ENCODE measurements at regions of chr2 and their contacts with region 1.

Region 1: DNA sequence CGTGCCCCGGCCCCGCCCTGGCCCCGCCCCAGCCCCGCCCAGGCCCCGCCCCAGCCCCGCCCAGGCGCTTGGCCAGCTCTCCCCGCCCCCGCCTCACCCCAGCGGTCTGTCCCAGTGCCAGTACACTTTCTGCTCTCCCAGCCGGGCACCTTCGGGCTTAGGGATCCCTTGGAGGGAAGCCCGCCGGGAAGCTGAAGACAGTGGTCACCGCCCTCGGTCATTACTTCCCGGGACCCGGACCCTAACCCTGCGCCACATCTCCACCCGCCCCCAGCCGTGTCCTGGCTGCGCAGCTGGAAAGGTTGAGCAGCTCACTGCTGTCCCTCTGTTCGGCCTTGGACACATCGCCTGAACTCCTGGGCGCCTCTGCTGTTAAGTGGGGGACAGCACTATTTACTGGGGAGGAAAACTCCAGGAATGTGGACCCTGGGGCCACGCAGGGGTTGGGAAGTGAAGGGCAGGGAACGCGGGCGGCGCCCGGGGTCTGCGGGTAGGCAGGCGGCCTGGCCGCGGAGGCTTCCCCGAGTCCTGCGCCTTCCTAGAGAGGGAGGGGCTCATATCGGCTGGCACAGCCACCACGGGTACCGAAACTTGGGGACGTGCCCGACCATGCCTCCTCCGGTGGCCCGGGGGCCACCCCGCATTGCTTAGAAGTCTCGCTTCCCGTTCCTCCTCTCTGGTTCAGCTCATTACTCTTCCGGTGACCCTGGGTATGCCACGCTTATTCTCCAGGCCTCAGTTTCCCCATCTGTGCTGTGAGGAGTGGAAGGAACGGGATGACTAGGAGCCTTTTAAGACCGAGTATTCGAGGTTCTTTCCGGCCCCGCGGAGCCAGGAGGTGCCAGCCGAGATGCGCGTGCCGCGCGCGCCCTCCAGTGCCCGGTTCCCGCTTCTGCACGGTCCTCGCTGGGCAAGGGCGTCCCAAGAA is 121.0 kb downstream of the GYPC start:
- DNase-seq: peak; percentile 72
- H3K4me3 Mint-ChIP-seq: peak overlapping the region; percentile 87
- H3K27ac Mint-ChIP-seq: peak overlapping the region; percentile 18
- H3K4me1 Mint-ChIP-seq: peaks cover 6% of the 10 kb centered on the region
- H3K27me3 Mint-ChIP-seq: peaks cover 10% of the 10 kb centered on the region

Region 2: GRCh38 chr2:124804014-124804940 is 1972.7 kb before region 1 on chr2:
- intact Hi-C with region 1: loop called (anchors 5 kb)
- DNase-seq: no peak
- H3K4me3 Mint-ChIP-seq: no peak overlapping the region
- H3K27ac Mint-ChIP-seq: no peak overlapping the region
- H3K4me1 Mint-ChIP-seq: no peaks in the 10 kb centered on the region
- H3K27me3 Mint-ChIP-seq: no peaks in the 10 kb centered on the region

Region 3: GRCh38 chr2:126359494-126359893 is 417.5 kb before region 1 on chr2:
- intact Hi-C with region 1: loop called (anchors 2 kb)
- DNase-seq: no peak
- H3K4me3 Mint-ChIP-seq: no peak overlapping the region
- H3K27ac Mint-ChIP-seq: no peak overlapping the region
- H3K4me1 Mint-ChIP-seq: no peaks in the 10 kb centered on the region
- H3K27me3 Mint-ChIP-seq: no peaks in the 10 kb centered on the region

Region 4: DNA sequence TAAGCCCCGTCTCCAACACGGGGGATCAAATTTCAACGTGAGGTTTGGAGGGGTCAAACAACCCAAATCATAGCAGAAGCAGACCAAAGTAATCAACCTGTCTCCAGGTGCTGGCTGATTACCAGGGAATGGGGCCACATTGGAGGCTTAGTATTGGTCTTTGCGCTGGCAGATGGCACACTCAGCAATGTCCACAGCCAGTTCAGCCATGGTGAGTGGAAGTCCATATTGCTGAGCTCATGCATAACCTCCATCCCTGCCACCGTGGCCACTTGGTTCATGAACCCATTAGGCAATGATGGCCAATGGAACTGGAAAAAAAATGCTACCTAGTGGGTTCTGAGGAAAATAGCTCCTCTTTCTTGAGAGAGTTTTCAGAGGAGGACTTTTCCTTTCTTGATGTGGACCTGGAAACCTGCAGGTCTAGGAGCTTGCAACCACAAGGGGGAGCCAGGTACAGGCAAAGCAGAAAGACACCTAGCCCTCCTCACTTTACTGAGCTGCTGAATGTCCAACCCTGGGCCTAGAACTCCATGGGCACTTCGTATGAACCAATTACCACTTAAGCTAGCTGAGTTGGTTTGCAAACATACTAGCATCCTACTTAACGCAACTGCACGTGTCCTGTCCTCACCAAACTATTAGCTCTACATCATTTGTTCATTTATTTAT is 249.0 kb before region 1 on chr2:
- intact Hi-C with region 1: loop called (anchors 1 kb)
- DNase-seq: peak; percentile 38
- H3K4me3 Mint-ChIP-seq: no peak overlapping the region
- H3K27ac Mint-ChIP-seq: no peak overlapping the region
- H3K4me1 Mint-ChIP-seq: no peaks in the 10 kb centered on the region
- H3K27me3 Mint-ChIP-seq: peaks cover 6% of the 10 kb centered on the region

Region 5: DNA sequence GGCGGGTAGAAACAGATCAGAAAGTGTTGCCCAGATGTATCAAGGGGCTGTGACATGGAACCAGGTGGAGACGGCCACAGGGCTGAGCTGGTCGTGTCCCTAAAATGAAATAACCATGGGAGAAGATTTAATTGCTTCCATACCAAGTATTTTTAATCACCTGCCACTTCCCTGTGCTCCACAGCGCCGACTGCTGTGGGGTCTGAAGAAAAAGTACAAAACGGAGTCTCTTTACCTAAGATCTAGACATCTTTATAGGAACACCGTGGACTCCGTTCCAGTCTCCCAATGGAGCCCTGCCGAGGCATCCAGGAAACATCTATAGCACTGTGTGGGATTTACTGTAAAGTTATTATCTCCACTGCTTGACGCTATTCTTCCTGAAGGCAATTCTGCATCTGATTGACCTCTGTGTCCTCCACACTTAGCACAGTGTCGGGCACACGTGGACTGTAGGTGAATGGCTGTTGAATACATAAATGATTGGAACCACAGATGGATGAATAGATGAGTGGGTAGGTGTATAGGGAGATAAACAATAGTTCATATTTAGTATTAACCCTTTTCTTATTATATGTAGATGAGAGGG is 142.6 kb before region 1 on chr2:
- intact Hi-C with region 1: loop called (anchors 2 kb)
- DNase-seq: no peak
- H3K4me3 Mint-ChIP-seq: no peak overlapping the region
- H3K27ac Mint-ChIP-seq: no peak overlapping the region
- H3K4me1 Mint-ChIP-seq: no peaks in the 10 kb centered on the region
- H3K27me3 Mint-ChIP-seq: peaks cover 29% of the 10 kb centered on the region